Activated CD4-positive, alpha-beta memory T cell treated with anti-CD3 and anti-CD28 coated beads, Interleukin-2, amount 10 ng/mL, durations not matched to agents 7 days and 5 days (primary cell): ENCODE measurements at regions of chr17 and their contacts with region 1.

Region 1: GRCh38 chr17:7561028-7561575 is 617 bp upstream of the SENP3 start:
- DNase-seq: peak; percentile 85
- H3K4me3 Mint-ChIP-seq: peak overlapping the region; percentile 91
- H3K27ac Mint-ChIP-seq: peak overlapping the region; percentile 93
- H3K4me1 Mint-ChIP-seq: peaks cover 52% of the 10 kb centered on the region
- H3K27me3 Mint-ChIP-seq: no peaks in the 10 kb centered on the region

Region 2: DNA sequence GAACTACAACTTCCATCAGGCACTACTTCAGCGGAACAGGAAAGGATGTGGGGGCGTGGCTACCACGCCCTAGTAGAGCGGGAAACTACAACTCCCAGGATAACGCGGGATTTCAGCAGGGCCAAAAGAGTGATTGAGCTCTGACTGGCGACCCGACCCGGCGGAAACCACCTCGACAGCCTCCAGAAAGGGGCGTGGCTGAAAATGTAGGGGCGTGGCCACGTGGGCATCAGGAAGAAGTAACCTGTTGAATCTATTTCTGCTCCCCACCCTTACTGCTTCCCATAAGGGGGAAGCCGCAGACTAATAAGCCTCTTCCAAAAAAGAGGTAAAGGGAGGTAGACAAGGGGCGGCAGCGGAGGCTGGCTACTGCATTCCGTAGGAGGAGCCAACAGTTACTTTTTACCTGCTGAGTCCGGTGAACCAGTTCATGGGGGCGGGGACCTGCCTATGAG is 125.9 kb before region 1 on chr17 and contains the start of gene TMEM102:
- CTCF ChIA-PET with region 1: interaction called, 28 read pairs
- POLR2A ChIA-PET with region 1: interaction called, 24 read pairs
- DNase-seq: peak; percentile 98
- H3K4me3 Mint-ChIP-seq: peak within 1 kb of the TSS; percentile 90
- H3K27ac Mint-ChIP-seq: peak within 1 kb of the TSS; percentile 98
- H3K4me1 Mint-ChIP-seq: peaks cover 39% of the 10 kb centered on the region
- H3K27me3 Mint-ChIP-seq: peaks cover 20% of the 10 kb centered on the region
- total RNA-seq, gene TMEM102: 18.0 TPM

Region 3: GRCh38 chr17:7509937-7510336 is 51.2 kb before region 1 on chr17:
- CTCF ChIA-PET with region 1: interaction called, 207 read pairs
- POLR2A ChIA-PET with region 1: interaction called, 43 read pairs
- DNase-seq: no peak
- H3K4me3 Mint-ChIP-seq: no peak overlapping the region
- H3K27ac Mint-ChIP-seq: no peak overlapping the region
- H3K4me1 Mint-ChIP-seq: no peaks in the 10 kb centered on the region
- H3K27me3 Mint-ChIP-seq: no peaks in the 10 kb centered on the region

Region 4: GRCh38 chr17:7523033-7523432 is 38.1 kb before region 1 on chr17:
- CTCF ChIA-PET with region 1: interaction called, 207 read pairs
- POLR2A ChIA-PET with region 1: interaction called, 4 read pairs
- DNase-seq: peak; percentile 53
- H3K4me3 Mint-ChIP-seq: no peak overlapping the region
- H3K27ac Mint-ChIP-seq: no peak overlapping the region
- H3K4me1 Mint-ChIP-seq: no peaks in the 10 kb centered on the region
- H3K27me3 Mint-ChIP-seq: no peaks in the 10 kb centered on the region

Region 5: GRCh38 chr17:7548585-7549400 is 12.3 kb before region 1 on chr17 and contains the start of gene TNFSF12:
- CTCF ChIA-PET with region 1: interaction called, 33 read pairs
- POLR2A ChIA-PET with region 1: interaction called, 21 read pairs
- DNase-seq: peak; percentile 73
- H3K4me3 Mint-ChIP-seq: peak within 1 kb of the TSS; percentile 99
- H3K27ac Mint-ChIP-seq: peak within 1 kb of the TSS; percentile 93
- H3K4me1 Mint-ChIP-seq: peaks cover 58% of the 10 kb centered on the region
- H3K27me3 Mint-ChIP-seq: no peaks in the 10 kb centered on the region
- total RNA-seq, gene TNFSF12: 79.8 to 86.7 TPM

Region 6: DNA sequence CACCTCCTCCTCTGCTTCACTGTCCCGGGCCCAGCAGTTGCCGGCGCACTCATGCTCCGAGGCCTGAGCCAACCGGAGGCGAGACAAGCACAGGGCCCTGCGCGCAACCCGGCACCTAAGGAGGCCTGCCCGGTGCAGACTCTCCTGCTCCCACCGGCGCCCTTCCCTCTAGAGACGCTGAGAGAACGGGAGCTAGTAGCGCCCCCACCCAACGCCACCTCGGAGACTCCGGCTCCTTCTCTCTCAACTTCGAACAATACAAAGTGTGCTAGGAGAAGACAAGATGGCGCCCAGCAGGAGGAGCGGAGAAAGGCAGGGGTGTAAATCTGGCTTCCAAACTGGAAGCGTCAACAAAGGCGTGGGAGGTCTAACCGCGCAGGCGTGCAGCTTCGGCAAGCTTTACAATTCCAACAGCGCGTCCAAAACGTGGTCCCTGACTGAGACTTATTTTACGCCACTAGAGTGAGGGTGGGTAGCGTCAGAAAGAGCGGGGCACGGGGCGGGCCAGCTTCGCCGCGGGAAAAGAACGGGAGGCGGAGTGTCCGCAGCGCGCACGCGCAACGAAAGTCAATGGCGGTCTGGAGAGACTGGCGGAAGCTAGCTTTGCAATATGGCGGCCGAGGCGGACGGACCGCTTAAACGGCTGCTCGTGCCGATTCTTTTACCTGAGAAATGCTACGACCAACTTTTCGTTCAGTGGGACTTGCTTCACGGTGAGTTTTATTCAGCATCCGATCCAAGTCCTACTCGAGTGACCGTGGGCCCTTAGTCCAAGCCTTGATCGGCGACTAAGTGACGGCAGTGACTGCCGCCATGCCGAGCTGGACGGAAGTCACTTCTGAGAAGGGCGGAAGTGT is 22.4 kb after region 1 on chr17 and contains the start of gene MPDU1:
- CTCF ChIA-PET with region 1: interaction called, 17 read pairs
- POLR2A ChIA-PET with region 1: interaction called, 18 read pairs
- DNase-seq: peak; percentile 96
- H3K4me3 Mint-ChIP-seq: peak within 1 kb of the TSS; percentile 97
- H3K27ac Mint-ChIP-seq: peak within 1 kb of the TSS; percentile 99
- H3K4me1 Mint-ChIP-seq: peaks cover 68% of the 10 kb centered on the region
- H3K27me3 Mint-ChIP-seq: no peaks in the 10 kb centered on the region
- total RNA-seq, gene MPDU1: 54.1 to 58.6 TPM

Region 7: DNA sequence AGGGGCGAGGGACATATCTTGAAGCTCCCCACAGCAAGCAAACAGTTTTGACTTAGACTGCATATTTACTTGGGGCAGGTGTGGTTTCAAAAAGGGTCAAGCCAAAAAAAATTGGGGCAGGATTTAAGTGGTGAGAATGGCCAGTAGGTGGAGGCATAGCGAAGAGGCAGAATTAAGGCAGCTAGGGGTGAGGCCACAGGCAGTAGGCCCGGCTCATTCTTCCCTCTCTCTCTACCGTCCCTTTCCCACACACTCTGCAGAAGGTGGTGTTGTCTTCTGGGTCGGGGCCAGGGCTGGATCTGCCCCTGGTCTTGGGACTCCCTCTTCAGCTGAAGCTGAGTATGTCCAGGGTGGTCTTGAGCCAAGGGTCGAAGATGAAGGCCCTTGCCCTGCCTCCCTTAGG is 71.4 kb after region 1 on chr17:
- CTCF ChIA-PET with region 1: no interaction called
- POLR2A ChIA-PET with region 1: no interaction called
- DNase-seq: peak; percentile 47
- H3K4me3 Mint-ChIP-seq: no peak overlapping the region
- H3K27ac Mint-ChIP-seq: no peak overlapping the region
- H3K4me1 Mint-ChIP-seq: peaks cover 5% of the 10 kb centered on the region
- H3K27me3 Mint-ChIP-seq: no peaks in the 10 kb centered on the region